A549 (cell line): ENCODE measurements at regions of chr17 and their contacts with region 1.

Region 1: DNA sequence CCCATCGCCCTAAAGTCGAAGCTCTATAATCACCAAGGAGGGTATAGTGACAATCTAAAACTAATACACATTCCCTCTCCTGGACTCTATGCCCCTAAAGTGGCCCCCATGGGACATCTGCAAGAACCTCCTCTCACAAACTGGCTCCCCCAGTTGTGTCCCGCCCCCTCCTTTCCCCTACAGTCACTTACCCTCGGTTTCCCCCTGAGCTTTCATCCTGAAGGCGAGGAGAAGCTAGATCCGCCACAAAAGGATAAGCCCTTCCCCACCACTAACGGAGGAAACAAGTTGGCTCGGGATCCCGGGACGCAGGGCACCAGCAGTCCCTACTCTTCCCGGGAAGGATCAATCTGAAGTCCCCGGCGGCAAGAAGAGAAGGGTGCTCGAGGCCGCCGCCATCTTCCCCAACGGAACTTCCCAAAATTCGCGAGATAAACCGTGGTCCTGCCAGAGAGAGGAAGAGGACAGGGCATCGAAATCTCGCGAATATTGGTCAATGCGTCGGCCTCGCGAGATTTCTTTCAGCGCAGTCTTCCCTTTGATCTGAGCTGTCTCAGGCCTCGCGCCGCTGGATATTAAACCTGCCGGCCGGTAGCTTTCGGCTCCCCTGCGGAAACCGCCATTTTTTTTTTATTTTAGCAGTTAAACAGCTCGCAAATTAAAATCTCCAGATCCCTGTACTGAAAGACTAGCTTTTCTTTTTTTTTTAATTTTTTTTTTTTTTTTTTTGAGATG is at the start of gene MED1:
- DNase-seq: peak; percentile 99 to 100
- ATAC-seq: peak; percentile 98 to 99
- H3K4me3 ChIP-seq: peak within 1 kb of the TSS; percentile 72
- H3K27ac ChIP-seq: peak within 1 kb of the TSS; percentile 88 to 92
- H3K4me1 ChIP-seq: peaks cover 21% of the 10 kb centered on the region; the same call in 2 of the 3 replicates
- CTCF ChIP-seq: no peak
- EP300 ChIP-seq: no peak
- POLR2A ChIP-seq: peak; percentile 78
- RAD21 ChIP-seq: no peak
- polyA plus RNA-seq, gene MED1: 74.9 and 76.2 TPM in 2 replicates

Region 2: DNA sequence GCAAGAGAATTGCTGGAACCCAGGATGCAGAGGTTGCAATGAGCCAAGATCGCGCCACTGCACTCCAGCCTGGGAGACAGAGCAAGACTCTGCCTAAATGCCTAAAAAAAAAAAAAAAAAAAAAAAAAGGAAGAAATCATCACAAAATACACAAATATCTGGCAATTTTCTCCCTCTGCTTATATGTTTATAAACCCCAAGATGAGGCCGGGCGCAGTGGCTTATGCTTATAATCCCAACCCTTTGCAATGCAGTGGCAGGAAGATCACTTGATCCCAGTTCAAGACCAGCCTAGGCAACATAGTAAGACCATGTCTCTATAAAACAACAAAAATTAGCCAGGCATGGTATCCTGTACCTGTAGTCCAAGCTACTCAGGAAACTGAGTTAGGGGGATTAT is 21.4 kb before region 1 on chr17:
- CTCF ChIA-PET with region 1: interaction called, 13 read pairs
- POLR2A ChIA-PET with region 1: interaction called, 4 read pairs
- DNase-seq: no peak
- ATAC-seq: no peak
- H3K4me3 ChIP-seq: no peak overlapping the region
- H3K27ac ChIP-seq: no peak overlapping the region
- H3K4me1 ChIP-seq: no peaks in the 10 kb centered on the region
- CTCF ChIP-seq: no peak
- EP300 ChIP-seq: no peak
- POLR2A ChIP-seq: no peak
- RAD21 ChIP-seq: no peak

Region 3: DNA sequence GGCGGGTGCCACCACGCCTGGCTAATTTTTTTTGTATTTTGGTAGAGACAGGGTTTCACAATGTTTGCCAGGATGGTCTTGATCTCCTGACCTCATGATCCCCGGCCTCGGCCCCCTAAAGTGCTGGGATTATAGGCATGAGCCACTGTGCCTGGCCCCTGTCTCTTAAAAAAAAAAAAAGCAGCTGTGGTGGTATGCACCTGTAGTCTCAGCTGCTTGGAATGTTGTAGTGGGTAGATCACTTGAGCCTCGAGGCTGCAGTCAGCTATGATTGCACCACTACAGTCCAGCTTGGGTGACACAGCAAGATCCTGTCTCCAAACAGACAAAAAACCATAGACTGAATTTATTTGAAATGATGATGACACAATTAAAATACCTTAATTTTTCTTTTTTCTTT is 34.5 kb after region 1 on chr17:
- CTCF ChIA-PET with region 1: interaction called, 5 read pairs
- POLR2A ChIA-PET with region 1: interaction called, 12 read pairs
- DNase-seq: peak in 1 of 2 experiments; percentile 84
- ATAC-seq: peak; percentile 91 to 100
- H3K4me3 ChIP-seq: no peak overlapping the region
- H3K27ac ChIP-seq: peak overlapping the region; percentile 78 to 83
- H3K4me1 ChIP-seq: peaks cover 34% of the 10 kb centered on the region
- CTCF ChIP-seq: no peak
- EP300 ChIP-seq: peak in 1 of 2 experiments; percentile 18; a peak in 1 of 5 replicates
- POLR2A ChIP-seq: no peak
- RAD21 ChIP-seq: no peak

Region 4: GRCh38 chr17:39527220-39527813 is 76.3 kb after region 1 on chr17:
- CTCF ChIA-PET with region 1: no interaction called
- POLR2A ChIA-PET with region 1: no interaction called
- DNase-seq: peak in 1 of 2 experiments; percentile 37
- ATAC-seq: peak; percentile 72 to 80
- H3K4me3 ChIP-seq: no peak overlapping the region
- H3K27ac ChIP-seq: no peak overlapping the region
- H3K4me1 ChIP-seq: no peaks in the 10 kb centered on the region
- CTCF ChIP-seq: peak; percentile 60
- EP300 ChIP-seq: no peak
- POLR2A ChIP-seq: no peak
- RAD21 ChIP-seq: peak in 1 of 2 experiments; percentile 25; a peak in 1 of 5 replicates